A549 (cell line): ENCODE measurements at regions of chr14 and their contacts with region 1.

Region 1: DNA sequence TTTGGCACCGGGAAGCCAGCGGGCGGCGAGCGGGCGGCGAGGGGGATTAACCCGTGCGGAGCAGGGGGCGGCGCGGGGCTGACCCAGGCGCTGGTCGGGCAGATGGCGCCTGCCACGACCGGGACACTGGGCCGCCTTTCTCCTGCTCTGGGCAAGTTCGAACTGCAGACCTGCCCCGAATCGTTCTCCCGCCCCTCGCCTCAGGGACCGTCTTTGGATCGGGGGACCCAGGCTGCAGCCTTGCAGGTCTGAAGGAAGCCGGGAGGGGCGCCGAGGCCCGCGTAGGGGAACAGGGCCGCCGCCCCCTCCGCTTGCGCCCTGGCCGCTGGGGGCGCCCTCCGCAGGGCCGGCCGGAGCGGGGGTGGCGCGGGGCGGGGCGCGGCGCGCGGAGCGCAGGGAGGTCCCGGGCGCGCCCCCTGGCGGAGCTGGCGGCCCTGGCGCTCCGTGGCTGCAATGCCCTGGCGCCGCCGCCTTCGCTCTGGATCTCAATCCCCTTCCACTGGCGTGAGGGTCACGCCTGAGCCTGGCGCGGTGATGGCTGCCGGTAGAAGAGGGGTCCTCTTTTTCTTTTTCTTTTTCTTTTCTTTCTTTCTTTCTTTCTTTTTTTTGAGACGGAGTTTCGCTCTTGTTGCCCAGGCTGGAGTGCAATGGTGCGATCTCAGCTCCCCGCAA is 449 bp upstream of the LTBP2 start:
- DNase-seq: peak; percentile 55 to 78
- ATAC-seq: peak; percentile 75 to 84
- H3K4me3 ChIP-seq: peak overlapping the region; percentile 66
- H3K27ac ChIP-seq: peak overlapping the region; percentile 89 to 91
- H3K4me1 ChIP-seq: peaks cover 54% of the 10 kb centered on the region
- CTCF ChIP-seq: peak; percentile 100
- EP300 ChIP-seq: peak in 1 of 2 experiments; percentile 35; a peak in 1 of 5 replicates
- POLR2A ChIP-seq: no peak
- RAD21 ChIP-seq: peak; percentile 34 to 76; a peak in 3 of 5 replicates

Region 2: DNA sequence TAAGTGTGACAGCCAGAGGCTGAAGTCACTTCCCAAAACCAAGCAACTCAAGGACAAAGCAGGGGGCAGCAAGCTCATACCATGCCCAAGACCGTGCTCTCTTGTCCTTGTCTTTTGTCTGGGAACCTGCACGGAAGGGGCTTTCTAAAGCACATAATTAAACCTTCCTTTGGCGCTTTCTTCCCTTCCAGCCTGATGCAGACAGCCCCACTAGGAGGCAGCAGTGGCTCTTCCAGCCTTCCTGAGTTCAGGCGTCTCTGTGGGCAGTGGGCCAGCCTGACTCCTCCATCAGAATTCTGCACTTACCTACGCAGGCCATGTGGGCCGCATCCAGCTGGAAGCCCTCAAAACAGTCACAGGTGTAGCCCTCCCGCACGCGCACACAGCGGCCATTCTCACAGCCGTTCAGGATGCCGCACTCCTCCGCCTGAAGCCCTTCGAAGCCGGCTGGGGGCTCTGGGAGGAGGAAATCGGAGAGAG is 111.3 kb before region 1 on chr14:
- CTCF ChIA-PET with region 1: interaction called, 39 read pairs
- POLR2A ChIA-PET with region 1: no interaction called
- DNase-seq: peak; percentile 49 to 68
- ATAC-seq: peak; percentile 72 to 85
- H3K4me3 ChIP-seq: no peak overlapping the region
- H3K27ac ChIP-seq: peak overlapping the region in 1 of 2 experiments; percentile 68; a peak in 2 of 6 replicates
- H3K4me1 ChIP-seq: peaks cover 12% of the 10 kb centered on the region; the same call in 2 of the 3 replicates
- CTCF ChIP-seq: peak; percentile 56
- EP300 ChIP-seq: no peak
- POLR2A ChIP-seq: no peak
- RAD21 ChIP-seq: peak; percentile 62 to 77

Region 3: GRCh38 chr14:74571901-74572725 is 40.4 kb before region 1 on chr14:
- CTCF ChIA-PET with region 1: interaction called, 42 read pairs
- POLR2A ChIA-PET with region 1: interaction called, 10 read pairs
- DNase-seq: peak; percentile 74 to 91
- ATAC-seq: peak; percentile 84 to 85
- H3K4me3 ChIP-seq: peak overlapping the region; percentile 25; the same call in 2 of the 3 replicates
- H3K27ac ChIP-seq: peak overlapping the region; percentile 91 to 95
- H3K4me1 ChIP-seq: peaks cover 82% of the 10 kb centered on the region
- CTCF ChIP-seq: no peak
- EP300 ChIP-seq: peak; percentile 83 to 93; a peak in 4 of 5 replicates
- POLR2A ChIP-seq: no peak
- RAD21 ChIP-seq: no peak

Region 4: GRCh38 chr14:74627076-74627475 is 14.6 kb after region 1 on chr14:
- CTCF ChIA-PET with region 1: interaction called, 228 read pairs
- POLR2A ChIA-PET with region 1: interaction called, 3 read pairs
- DNase-seq: no peak
- ATAC-seq: no peak
- H3K4me3 ChIP-seq: no peak overlapping the region
- H3K27ac ChIP-seq: peak overlapping the region in 1 of 2 experiments; percentile 66; a peak in 1 of 6 replicates
- H3K4me1 ChIP-seq: peaks cover 22% of the 10 kb centered on the region
- CTCF ChIP-seq: no peak
- EP300 ChIP-seq: no peak
- POLR2A ChIP-seq: no peak
- RAD21 ChIP-seq: no peak

Region 5: GRCh38 chr14:74684434-74684833 is 71.9 kb after region 1 on chr14:
- CTCF ChIA-PET with region 1: interaction called, 10 read pairs
- POLR2A ChIA-PET with region 1: no interaction called
- DNase-seq: no peak
- ATAC-seq: no peak
- H3K4me3 ChIP-seq: no peak overlapping the region
- H3K27ac ChIP-seq: no peak overlapping the region
- H3K4me1 ChIP-seq: peaks cover 10% of the 10 kb centered on the region; the same call in 2 of the 3 replicates
- CTCF ChIP-seq: no peak
- EP300 ChIP-seq: no peak
- POLR2A ChIP-seq: no peak
- RAD21 ChIP-seq: no peak

Region 6: GRCh38 chr14:74804219-74804826 is 191.8 kb after region 1 on chr14:
- CTCF ChIA-PET with region 1: interaction called, 19 read pairs
- POLR2A ChIA-PET with region 1: no interaction called
- DNase-seq: peak; percentile 10 to 50
- ATAC-seq: peak; percentile 62 to 77; a peak in 4 of 6 replicates
- H3K4me3 ChIP-seq: no peak overlapping the region
- H3K27ac ChIP-seq: no peak overlapping the region
- H3K4me1 ChIP-seq: no peaks in the 10 kb centered on the region
- CTCF ChIP-seq: peak; percentile 44; the same call in 2 of the 3 replicates
- EP300 ChIP-seq: no peak
- POLR2A ChIP-seq: no peak
- RAD21 ChIP-seq: peak; percentile 53 to 58; a peak in 4 of 5 replicates